Panc1 (cell line): ENCODE measurements at regions of chr6 and their contacts with region 1.

Region 1: DNA sequence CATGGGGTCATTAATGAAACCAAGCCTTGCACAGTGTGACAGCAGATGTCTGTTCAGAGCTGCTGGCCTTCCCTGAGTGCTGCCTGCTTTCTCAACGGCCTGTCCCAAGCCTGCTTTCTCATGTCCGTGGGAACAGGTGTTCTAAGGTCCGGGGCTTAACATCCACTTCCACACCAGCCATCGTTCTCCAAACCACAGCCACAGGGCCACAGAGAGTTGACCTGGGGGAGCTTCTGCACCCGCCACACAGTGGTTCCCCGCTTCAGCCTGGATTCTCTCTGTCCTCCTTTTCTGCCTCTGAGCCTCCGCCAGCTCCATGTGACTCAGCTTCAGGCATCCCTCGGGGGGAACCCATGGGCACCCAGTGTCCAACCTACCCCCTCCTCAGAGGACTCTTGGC is 26.9 kb upstream of the PPP1R3G start:
- DNase-seq: no peak
- ATAC-seq: no peak
- H3K4me3 ChIP-seq: no peak overlapping the region
- H3K27ac ChIP-seq: no peak overlapping the region
- H3K4me1 ChIP-seq: no peaks in the 10 kb centered on the region
- H3K27me3 ChIP-seq: no peaks in the 10 kb centered on the region; the same call in 1 of the 2 replicates
- CTCF ChIP-seq: no peak

Region 2: DNA sequence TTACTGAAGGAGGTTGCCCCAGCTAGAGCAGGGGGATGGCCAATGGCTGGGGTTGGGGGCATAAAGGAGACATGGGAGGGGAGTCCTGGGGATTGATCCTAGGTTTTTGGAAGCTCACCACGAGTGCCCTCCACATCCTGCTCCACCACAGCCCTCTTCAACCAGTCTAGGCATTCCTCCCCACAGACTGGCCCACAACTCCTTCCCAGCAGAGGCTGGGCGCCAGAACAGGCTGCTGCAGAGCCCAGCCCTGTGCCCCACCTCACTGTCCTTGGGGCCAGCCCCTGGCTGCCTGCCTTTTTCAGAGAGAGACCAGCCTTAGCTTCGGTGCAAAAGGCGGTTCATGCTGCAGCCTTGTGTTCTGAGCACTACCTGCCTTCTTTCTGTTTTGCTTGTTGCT is 70.8 kb before region 1 on chr6:
- CTCF ChIA-PET with region 1: no interaction called
- POLR2A ChIA-PET with region 1: no interaction called
- in situ Hi-C with region 1: no loop called
- intact Hi-C with region 1: no loop called
- DNase-seq: no peak
- ATAC-seq: no peak; the same call in 1 of the 2 replicates
- H3K4me3 ChIP-seq: no peak overlapping the region
- H3K27ac ChIP-seq: no peak overlapping the region
- H3K4me1 ChIP-seq: no peaks in the 10 kb centered on the region
- H3K27me3 ChIP-seq: no peaks in the 10 kb centered on the region
- CTCF ChIP-seq: no peak

Region 3: GRCh38 chr6:5188646-5189045 is 130.4 kb after region 1 on chr6:
- CTCF ChIA-PET with region 1: interaction called, 10 read pairs
- POLR2A ChIA-PET with region 1: no interaction called
- in situ Hi-C with region 1: no loop called
- intact Hi-C with region 1: no loop called
- DNase-seq: no peak
- ATAC-seq: no peak
- H3K4me3 ChIP-seq: no peak overlapping the region
- H3K27ac ChIP-seq: no peak overlapping the region
- H3K4me1 ChIP-seq: no peaks in the 10 kb centered on the region
- H3K27me3 ChIP-seq: no peaks in the 10 kb centered on the region
- CTCF ChIP-seq: no peak